Naive thymus-derived CD4-positive, alpha-beta T cell (primary cell): ENCODE measurements at regions of chr9 and their contacts with region 1.

Region 1: DNA sequence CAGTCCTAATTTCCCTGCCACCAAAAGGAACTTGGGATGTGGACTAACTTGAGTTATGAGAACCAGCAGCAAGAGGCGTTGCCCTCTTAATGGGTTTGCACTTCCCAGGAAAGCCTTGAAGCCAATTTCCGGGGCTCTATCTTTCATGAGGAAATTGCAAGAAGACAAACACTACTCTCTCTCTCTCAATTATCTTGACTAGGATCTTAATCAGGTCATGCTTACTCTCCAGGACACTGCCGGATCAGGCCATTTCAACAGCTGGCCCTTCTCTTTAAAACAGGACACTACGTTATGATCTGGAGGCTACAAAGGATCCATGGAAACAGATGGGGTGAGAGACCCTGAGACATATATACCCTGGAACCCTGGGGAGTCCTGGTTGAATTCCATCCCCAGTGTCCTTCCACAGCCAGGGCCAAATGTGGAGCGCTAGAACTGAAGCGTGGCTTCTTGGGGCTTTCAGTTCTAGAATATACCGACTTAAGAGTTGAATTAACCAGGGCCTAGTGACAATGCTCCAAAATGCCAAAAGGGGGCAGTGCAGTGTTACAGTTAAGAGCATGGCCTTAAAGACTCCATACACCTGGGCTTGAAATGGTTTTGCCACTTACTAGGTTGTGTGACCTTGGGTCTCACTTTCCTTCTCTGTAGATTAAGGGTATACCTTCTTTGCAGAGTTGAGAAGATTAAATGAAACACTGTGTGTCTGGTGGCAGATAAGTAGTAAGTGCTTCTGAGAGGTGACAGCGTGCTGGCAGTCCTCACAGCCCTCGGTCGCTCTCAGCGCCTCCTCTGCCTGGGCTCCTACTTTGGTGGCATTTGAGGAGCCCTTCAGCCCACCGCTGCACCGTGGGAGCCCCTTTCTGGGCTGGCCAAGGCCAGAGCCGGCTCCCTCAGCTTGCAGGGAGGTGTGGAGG is 21.1 kb downstream of the FAM219A start:
- DNase-seq: peak in 8 of 9 donors; percentile 49 to 74 (median 65)
- ATAC-seq: peak; percentile 92
- H3K4me3 ChIP-seq: no peak overlapping the region
- H3K4me3 Mint-ChIP-seq: no peak overlapping the region
- H3K27ac ChIP-seq: no peak overlapping the region
- H3K27ac Mint-ChIP-seq: no peak overlapping the region
- H3K4me1 ChIP-seq: peaks cover 0 to 6% of the 10 kb centered on the region in 2 donors
- H3K4me1 Mint-ChIP-seq: peaks cover 6 to 26% (median 17%) of the 10 kb centered on the region in 7 donors
- H3K27me3 ChIP-seq: no peaks in the 10 kb centered on the region
- H3K27me3 Mint-ChIP-seq: no peaks in the 10 kb centered on the region

Region 2: DNA sequence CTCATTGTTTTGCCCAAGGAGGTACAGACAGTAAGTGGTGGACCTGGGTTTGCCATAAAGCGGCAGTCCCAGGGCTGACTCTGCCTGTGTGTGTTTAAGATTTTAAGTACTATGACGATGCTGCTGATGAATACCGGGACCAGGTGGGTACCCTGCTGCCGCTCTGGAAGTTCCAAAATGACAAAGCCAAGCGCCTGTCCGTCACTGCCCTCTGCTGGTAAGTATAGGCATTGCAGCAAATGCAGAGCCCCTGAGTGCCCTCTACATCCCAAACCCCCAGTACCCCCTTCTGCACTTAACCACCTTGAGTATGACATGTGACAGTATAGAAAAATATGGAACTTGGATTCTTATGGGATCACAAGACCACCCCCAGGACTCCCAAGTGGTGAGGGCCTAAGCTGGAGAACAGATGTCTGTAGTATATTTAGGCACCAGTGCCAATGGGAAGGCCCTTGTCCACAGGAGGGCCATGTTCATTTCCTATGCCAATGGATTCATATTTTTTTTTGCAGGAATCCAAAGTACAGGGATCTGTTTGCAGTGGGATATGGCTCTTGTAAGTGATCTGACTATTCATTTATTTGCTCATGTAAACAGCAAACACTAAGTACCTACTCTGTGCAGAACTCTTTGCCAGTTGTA is 63.5 kb after region 1 on chr9:
- CTCF ChIA-PET with region 1: interaction called, 15 read pairs
- POLR2A ChIA-PET with region 1: no interaction called
- intact Hi-C with region 1: loop called (anchors 1 kb)
- DNase-seq: peak; percentile 38 to 80 (median 61)
- ATAC-seq: peak; percentile 90
- H3K4me3 ChIP-seq: no peak overlapping the region
- H3K4me3 Mint-ChIP-seq: no peak overlapping the region
- H3K27ac ChIP-seq: no peak overlapping the region
- H3K27ac Mint-ChIP-seq: no peak overlapping the region
- H3K4me1 ChIP-seq: no peaks in the 10 kb centered on the region
- H3K4me1 Mint-ChIP-seq: peaks cover 0 to 2% (median 0%) of the 10 kb centered on the region in 7 donors
- H3K27me3 ChIP-seq: no peaks in the 10 kb centered on the region
- H3K27me3 Mint-ChIP-seq: peaks cover 0 to 19% (median 0%) of the 10 kb centered on the region in 5 donors

Region 3: DNA sequence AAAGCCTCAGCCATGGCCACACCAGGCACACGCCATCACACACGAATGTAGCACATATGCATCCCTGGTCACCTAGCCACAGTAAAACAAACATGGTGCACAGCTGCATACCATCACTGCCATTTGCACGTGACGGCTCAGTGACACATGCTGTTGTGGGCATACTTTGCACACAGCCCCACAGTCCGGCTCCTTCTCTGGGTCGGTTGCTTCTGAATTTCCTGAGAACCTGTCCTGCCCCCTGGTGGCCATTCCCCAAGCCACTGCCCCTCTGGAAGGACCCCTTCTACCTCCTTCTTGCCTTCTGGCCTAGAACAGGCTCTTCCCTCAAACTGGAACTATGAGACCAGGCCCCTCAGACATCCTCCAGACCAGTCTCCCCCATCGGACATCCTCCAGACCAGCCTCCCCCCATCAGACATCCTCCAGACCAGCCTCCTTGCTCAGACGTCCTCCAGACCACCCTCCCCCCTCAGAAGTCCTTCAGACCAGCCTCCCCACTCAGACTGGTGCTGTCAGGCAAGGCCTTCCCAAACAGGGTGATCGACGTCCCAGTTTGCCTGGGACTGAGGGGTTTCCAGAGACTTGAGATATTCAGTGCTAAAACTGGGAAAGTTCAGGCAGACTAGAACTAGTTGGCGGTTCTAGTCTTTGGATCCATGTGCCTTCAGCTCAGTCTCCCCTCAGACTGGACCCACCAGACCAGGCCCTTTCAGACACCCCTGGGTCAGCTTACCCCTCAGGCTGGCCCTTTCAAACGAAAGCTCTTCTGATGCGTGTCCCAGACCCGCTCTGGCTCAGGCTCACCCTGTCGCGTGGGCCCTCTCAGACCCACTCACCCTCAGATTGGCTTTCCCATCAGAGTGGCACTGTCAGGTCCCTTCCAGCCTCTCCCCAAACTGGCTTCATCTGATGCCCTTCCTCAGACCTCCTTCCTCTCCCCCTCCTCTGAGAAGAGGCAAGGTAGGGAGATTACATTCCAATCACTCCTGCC is 109.9 kb after region 1 on chr9:
- CTCF ChIA-PET with region 1: no interaction called
- POLR2A ChIA-PET with region 1: no interaction called
- intact Hi-C with region 1: loop called (anchors 1 kb)
- DNase-seq: peak in 5 of 9 donors; percentile 21 to 47 (median 23)
- ATAC-seq: peak; percentile 58
- H3K4me3 ChIP-seq: no peak overlapping the region
- H3K4me3 Mint-ChIP-seq: peak overlapping the region in 1 of 10 donors; percentile 34
- H3K27ac ChIP-seq: no peak overlapping the region
- H3K27ac Mint-ChIP-seq: no peak overlapping the region
- H3K4me1 ChIP-seq: no peaks in the 10 kb centered on the region
- H3K4me1 Mint-ChIP-seq: peaks cover 0 to 10% (median 0%) of the 10 kb centered on the region in 7 donors
- H3K27me3 ChIP-seq: no peaks in the 10 kb centered on the region
- H3K27me3 Mint-ChIP-seq: peaks cover 7 to 34% (median 12%) of the 10 kb centered on the region in 5 donors

Region 4: GRCh38 chr9:34690983-34691935 is 254.0 kb after region 1 on chr9 and contains the start of gene CCL19:
- CTCF ChIA-PET with region 1: no interaction called
- POLR2A ChIA-PET with region 1: no interaction called
- intact Hi-C with region 1: no loop called
- DNase-seq: no peak
- ATAC-seq: peak; percentile 46
- H3K4me3 ChIP-seq: no peak within 1 kb of the TSS
- H3K4me3 Mint-ChIP-seq: no peak within 1 kb of the TSS
- H3K27ac ChIP-seq: no peak within 1 kb of the TSS
- H3K27ac Mint-ChIP-seq: no peak within 1 kb of the TSS
- H3K4me1 ChIP-seq: no peaks in the 10 kb centered on the region
- H3K4me1 Mint-ChIP-seq: peaks cover 0 to 2% (median 0%) of the 10 kb centered on the region in 7 donors
- H3K27me3 ChIP-seq: no peaks in the 10 kb centered on the region
- H3K27me3 Mint-ChIP-seq: peaks cover 0 to 7% (median 5%) of the 10 kb centered on the region in 5 donors
- total RNA-seq, gene CCL19: not detected